CD14-positive monocyte (primary cell): ENCODE measurements at regions of chr15 and their contacts with region 1.

Region 1: DNA sequence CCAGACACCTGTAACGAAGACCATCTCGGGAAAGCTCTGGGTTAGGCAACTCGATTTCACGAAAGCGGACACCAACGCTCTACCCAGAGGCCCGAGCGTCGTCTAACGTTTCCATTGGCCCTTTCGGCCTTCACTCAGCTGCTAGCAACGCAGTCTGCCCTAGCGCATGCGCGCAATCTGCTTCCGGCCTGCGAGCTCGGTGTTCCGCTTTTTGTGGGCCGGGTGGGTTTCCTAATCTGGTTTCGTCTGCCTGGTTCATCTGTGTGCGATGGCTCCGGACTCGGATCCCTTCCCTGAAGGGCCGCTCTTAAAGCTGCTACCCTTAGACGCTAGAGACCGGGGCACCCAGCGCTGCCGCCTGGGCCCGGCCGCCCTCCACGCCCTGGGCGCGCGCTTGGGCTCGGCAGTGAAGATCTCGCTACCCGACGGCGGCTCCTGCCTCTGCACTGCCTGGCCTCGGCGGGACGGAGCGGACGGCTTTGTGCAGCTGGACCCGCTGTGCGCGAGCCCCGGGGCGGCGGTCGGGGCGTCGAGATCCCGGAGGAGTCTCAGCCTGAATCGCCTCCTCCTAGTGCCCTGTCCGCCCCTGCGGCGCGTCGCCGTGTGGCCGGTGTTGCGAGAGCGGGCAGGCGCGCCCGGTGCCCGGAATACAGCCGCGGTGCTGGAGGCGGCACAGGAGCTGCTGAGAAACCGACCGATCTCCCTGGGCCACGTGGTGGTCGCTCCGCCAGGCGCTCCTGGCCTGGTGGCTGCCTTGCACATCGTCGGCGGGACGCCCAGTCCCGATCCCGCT is 24.0 kb upstream of the GATM start:
- DNase-seq: peak; percentile 98 to 100 (median 99)
- H3K4me3 ChIP-seq: peak overlapping the region; percentile 67 to 79 (median 76)
- H3K4me3 Mint-ChIP-seq: peak overlapping the region; percentile 90 to 94
- H3K27ac ChIP-seq: peak overlapping the region; percentile 63 to 95
- H3K27ac Mint-ChIP-seq: peak overlapping the region; percentile 89 to 95 (median 92)
- H3K4me1 ChIP-seq: peaks cover 25 to 31% of the 10 kb centered on the region in 2 donors
- H3K4me1 Mint-ChIP-seq: peaks cover 29% of the 10 kb centered on the region
- H3K27me3 ChIP-seq: no peaks in the 10 kb centered on the region
- H3K27me3 Mint-ChIP-seq: no peaks in the 10 kb centered on the region
- CTCF ChIP-seq: no peak

Region 2: DNA sequence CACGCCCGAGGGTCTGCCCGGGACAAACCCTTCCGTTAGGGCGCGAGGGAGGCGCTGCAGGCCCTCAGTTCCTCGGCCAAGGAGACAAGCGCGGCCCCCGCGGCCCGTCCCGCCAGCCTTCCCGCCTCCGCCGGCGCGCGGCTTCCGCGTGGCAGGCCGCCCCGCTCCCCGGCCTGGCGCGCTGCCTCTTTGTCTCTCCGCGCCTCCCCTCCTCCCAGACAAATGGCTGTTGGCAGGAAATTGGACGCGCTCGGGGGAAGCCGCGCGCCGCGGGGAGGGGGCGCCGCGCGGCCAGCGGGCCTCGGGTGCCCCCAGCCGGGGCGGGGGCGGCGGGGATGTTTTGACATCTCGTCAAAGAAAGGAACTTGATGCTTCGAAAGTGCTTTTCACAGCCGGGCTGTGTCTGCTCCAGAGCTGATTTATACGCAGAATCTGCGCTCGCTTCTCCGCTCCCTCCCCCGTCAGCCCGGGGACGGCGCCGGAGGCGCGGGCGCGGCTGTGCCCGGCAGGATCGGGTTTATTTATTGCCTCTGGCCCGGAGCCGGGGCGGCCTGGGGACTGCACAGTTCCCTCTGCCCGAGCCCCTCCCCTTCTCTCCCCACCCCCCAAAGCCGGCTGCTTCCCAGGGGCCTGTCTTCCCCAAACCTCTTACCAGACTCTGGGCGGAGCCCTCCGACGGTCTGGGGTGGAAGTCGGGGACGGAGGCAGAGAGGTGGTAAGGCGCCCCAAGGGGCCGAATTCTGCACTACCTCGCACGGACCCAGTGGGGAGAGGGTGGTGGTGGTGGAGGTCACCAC is 235.3 kb before region 1 on chr15:
- intact Hi-C with region 1: loop called (anchors 2 to 5 kb)
- DNase-seq: peak; percentile 87 to 92 (median 88)
- H3K4me3 ChIP-seq: peak overlapping the region; percentile 60 to 76 (median 64)
- H3K4me3 Mint-ChIP-seq: peak overlapping the region; percentile 48 to 62
- H3K27ac ChIP-seq: peak overlapping the region; percentile 76 to 90
- H3K27ac Mint-ChIP-seq: peak overlapping the region in 6 of 7 donors; percentile 23 to 84 (median 64)
- H3K4me1 ChIP-seq: peaks cover 18 to 26% of the 10 kb centered on the region in 2 donors
- H3K4me1 Mint-ChIP-seq: peaks cover 29% of the 10 kb centered on the region
- H3K27me3 ChIP-seq: no peaks in the 10 kb centered on the region
- H3K27me3 Mint-ChIP-seq: peaks cover 0 to 4% (median 0%) of the 10 kb centered on the region in 3 donors
- CTCF ChIP-seq: peak; percentile 88

Region 3: GRCh38 chr15:45198337-45199135 is 203.8 kb before region 1 on chr15:
- intact Hi-C with region 1: loop called (anchors 2 to 5 kb)
- DNase-seq: peak; percentile 98 to 99 (median 98)
- H3K4me3 ChIP-seq: peak overlapping the region; percentile 68 to 95 (median 91)
- H3K4me3 Mint-ChIP-seq: peak overlapping the region in 1 of 2 donors; percentile 88
- H3K27ac ChIP-seq: peak overlapping the region; percentile 97 to 99
- H3K27ac Mint-ChIP-seq: peak overlapping the region in 1 of 7 donors; percentile 82
- H3K4me1 ChIP-seq: peaks cover 34 to 40% of the 10 kb centered on the region in 2 donors
- H3K4me1 Mint-ChIP-seq: peaks cover 28% of the 10 kb centered on the region
- H3K27me3 ChIP-seq: no peaks in the 10 kb centered on the region
- H3K27me3 Mint-ChIP-seq: peaks cover 0 to 8% (median 2%) of the 10 kb centered on the region in 3 donors
- CTCF ChIP-seq: peak; percentile 67

Region 4: GRCh38 chr15:45287390-45287956 is 114.9 kb before region 1 on chr15:
- intact Hi-C with region 1: loop called in 1 of 2 experiments (anchors 10 kb)
- DNase-seq: no peak
- H3K4me3 ChIP-seq: no peak overlapping the region
- H3K4me3 Mint-ChIP-seq: no peak overlapping the region
- H3K27ac ChIP-seq: no peak overlapping the region
- H3K27ac Mint-ChIP-seq: no peak overlapping the region
- H3K4me1 ChIP-seq: no peaks in the 10 kb centered on the region
- H3K4me1 Mint-ChIP-seq: no peaks in the 10 kb centered on the region
- H3K27me3 ChIP-seq: no peaks in the 10 kb centered on the region
- H3K27me3 Mint-ChIP-seq: peaks cover 8 to 22% (median 14%) of the 10 kb centered on the region in 3 donors
- CTCF ChIP-seq: no peak

Region 5: DNA sequence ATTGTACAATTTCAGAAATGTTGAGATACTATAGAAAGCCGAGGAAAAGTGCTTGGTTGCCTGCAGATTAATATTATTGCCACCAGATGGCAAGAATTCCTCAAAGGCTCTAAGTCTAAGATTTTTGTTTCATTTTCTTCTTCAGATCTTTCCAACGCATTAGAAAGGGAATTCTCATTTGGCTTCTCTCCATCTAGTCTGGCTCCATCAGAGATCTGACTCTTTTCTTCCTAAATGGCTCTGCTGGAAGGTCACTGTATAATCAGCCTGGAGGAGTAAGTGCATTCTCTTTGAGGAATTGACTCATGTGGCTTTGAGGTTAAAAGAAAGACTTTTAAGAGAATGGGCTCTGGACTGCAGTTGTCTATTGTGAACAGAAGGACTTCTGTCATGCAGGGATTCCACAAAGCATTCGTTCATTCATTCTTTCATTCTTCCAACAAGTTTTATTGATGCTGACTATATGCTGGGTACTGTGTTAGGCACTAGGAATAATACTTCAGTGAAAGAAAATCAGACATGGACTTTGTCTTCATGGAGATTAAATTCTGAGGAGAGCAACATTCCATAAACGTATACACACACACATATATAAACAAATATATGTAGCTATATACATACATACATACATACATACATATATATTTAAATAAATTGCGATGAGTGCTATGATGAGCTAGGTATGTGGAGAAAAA is 95.0 kb before region 1 on chr15:
- intact Hi-C with region 1: loop called in 1 of 2 experiments (anchors 10 kb)
- DNase-seq: peak; percentile 4 to 30 (median 16)
- H3K4me3 ChIP-seq: peak overlapping the region in 2 of 3 experiments; percentile 19 to 58
- H3K4me3 Mint-ChIP-seq: peak overlapping the region; percentile 59 to 83
- H3K27ac ChIP-seq: no peak overlapping the region
- H3K27ac Mint-ChIP-seq: peak overlapping the region in 1 of 7 donors; percentile 15
- H3K4me1 ChIP-seq: peaks cover 4% of the 10 kb centered on the region in 2 donors
- H3K4me1 Mint-ChIP-seq: peaks cover 9% of the 10 kb centered on the region
- H3K27me3 ChIP-seq: peaks cover 2 to 19% of the 10 kb centered on the region in 2 donors
- H3K27me3 Mint-ChIP-seq: peaks cover 3 to 24% (median 18%) of the 10 kb centered on the region in 3 donors
- CTCF ChIP-seq: peak; percentile 66